Panc1 (cell line): ENCODE measurements at regions of chr2 and their contacts with region 1.

Region 1: GRCh38 chr2:64523666-64524603 is at the start of gene AFTPH:
- DNase-seq: peak; percentile 95
- ATAC-seq: peak; percentile 100
- H3K4me3 ChIP-seq: peak within 1 kb of the TSS; percentile 94
- H3K27ac ChIP-seq: peak within 1 kb of the TSS; percentile 95
- H3K4me1 ChIP-seq: peaks cover 16% of the 10 kb centered on the region
- H3K27me3 ChIP-seq: peaks cover 10% of the 10 kb centered on the region
- CTCF ChIP-seq: no peak
- total RNA-seq, gene AFTPH: 17.9 TPM

Region 2: DNA sequence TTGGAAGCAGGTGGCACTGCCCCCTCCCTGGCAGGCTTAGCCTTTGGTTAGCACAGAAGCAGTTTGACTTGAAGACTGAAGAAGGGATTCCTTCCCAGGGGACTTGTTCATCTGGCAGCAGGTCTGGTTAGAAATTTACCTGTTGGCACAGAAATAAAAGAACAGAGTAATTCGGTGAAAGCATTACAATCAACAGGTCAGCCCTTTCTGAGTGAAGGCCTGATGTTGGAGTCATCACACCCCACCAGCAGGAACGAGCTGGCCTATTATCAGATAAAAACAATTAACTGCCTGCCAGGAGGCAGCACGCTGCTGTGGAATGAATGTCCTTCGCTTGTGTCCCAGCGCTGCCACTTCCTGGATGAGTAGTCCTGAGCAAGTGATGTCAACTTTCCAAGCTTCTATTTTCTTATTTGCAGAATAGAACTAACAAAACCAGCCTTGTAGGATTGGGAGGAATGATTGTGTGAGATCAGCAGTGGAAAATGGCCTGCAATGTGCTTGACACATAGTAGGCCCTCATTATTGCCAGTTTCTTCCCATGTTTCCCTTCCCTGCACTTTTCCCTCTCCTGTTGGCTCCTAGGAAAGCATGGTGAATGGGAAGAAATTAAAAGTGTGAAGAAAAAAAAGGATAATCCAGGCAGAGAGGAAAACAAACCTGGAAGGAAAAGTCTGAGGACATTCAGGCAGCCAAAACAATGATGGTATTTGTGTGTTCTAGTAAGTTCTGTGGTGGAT is 41.0 kb before region 1 on chr2:
- CTCF ChIA-PET with region 1: no interaction called
- POLR2A ChIA-PET with region 1: no interaction called
- in situ Hi-C with region 1: no loop called
- intact Hi-C with region 1: no loop called
- DNase-seq: no peak
- ATAC-seq: no peak
- H3K4me3 ChIP-seq: no peak overlapping the region
- H3K27ac ChIP-seq: no peak overlapping the region
- H3K4me1 ChIP-seq: no peaks in the 10 kb centered on the region
- H3K27me3 ChIP-seq: peaks cover 38% of the 10 kb centered on the region
- CTCF ChIP-seq: no peak

Region 3: GRCh38 chr2:64562148-64562784 is 38.3 kb after region 1 on chr2:
- CTCF ChIA-PET with region 1: interaction called, 6 read pairs
- POLR2A ChIA-PET with region 1: no interaction called
- in situ Hi-C with region 1: no loop called
- intact Hi-C with region 1: loop called (anchors 5 kb)
- DNase-seq: no peak
- ATAC-seq: no peak; the same call in 1 of the 2 replicates
- H3K4me3 ChIP-seq: no peak overlapping the region
- H3K27ac ChIP-seq: no peak overlapping the region
- H3K4me1 ChIP-seq: no peaks in the 10 kb centered on the region
- H3K27me3 ChIP-seq: no peaks in the 10 kb centered on the region
- CTCF ChIP-seq: peak; percentile 29; the same call in 1 of the 2 replicates

Region 4: DNA sequence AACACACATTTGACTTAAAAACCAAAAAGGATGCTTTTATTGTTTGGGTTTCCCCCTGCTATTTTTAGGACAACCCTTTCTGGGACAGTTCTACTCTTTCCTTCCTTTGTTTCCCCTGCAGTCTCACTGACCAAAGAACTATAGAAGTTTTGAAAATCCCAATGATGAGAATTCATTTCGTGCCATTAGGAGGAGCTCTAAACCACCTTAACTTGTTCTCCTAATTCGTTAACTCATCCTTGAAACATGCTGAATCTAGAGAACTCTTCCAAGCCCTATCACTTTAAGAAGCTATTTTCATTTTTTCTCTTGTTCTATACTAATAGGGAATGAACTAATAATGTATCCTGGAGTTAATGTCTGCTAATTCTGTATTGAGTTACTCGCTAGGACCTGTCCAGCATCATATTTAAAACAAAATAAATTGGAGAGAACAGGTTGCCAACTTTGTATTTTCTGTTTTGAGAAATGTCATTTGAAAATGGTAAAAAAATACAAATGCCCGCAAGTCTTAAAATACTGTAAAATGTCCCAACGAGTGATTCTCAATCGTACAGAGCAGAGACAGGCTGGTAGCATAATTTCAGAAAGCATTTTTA is 63.0 kb after region 1 on chr2:
- CTCF ChIA-PET with region 1: interaction called, 15 read pairs
- POLR2A ChIA-PET with region 1: no interaction called
- in situ Hi-C with region 1: no loop called
- intact Hi-C with region 1: no loop called
- DNase-seq: peak; percentile 36
- ATAC-seq: no peak
- H3K4me3 ChIP-seq: no peak overlapping the region
- H3K27ac ChIP-seq: no peak overlapping the region
- H3K4me1 ChIP-seq: no peaks in the 10 kb centered on the region
- H3K27me3 ChIP-seq: no peaks in the 10 kb centered on the region
- CTCF ChIP-seq: peak; percentile 68; the same call in 1 of the 2 replicates